Activated CD4-positive, alpha-beta T cell treated with anti-CD3 and anti-CD28 coated beads, Interleukin-2, amount 10 ng/mL, durations not matched to agents 24 days and 14 days (primary cell): ENCODE measurements at regions of chr18 and their contacts with region 1.

Region 1: GRCh38 chr18:49486953-49487710 is at the start of gene C18orf32:
- DNase-seq: peak; percentile 98
- H3K4me3 Mint-ChIP-seq: peak within 1 kb of the TSS; percentile 89
- H3K27ac Mint-ChIP-seq: peak within 1 kb of the TSS; percentile 94
- H3K4me1 Mint-ChIP-seq: peaks cover 42% of the 10 kb centered on the region
- H3K27me3 Mint-ChIP-seq: no peaks in the 10 kb centered on the region
- total RNA-seq, gene C18orf32: 20.4 and 26.1 TPM in 2 replicates

Region 2: DNA sequence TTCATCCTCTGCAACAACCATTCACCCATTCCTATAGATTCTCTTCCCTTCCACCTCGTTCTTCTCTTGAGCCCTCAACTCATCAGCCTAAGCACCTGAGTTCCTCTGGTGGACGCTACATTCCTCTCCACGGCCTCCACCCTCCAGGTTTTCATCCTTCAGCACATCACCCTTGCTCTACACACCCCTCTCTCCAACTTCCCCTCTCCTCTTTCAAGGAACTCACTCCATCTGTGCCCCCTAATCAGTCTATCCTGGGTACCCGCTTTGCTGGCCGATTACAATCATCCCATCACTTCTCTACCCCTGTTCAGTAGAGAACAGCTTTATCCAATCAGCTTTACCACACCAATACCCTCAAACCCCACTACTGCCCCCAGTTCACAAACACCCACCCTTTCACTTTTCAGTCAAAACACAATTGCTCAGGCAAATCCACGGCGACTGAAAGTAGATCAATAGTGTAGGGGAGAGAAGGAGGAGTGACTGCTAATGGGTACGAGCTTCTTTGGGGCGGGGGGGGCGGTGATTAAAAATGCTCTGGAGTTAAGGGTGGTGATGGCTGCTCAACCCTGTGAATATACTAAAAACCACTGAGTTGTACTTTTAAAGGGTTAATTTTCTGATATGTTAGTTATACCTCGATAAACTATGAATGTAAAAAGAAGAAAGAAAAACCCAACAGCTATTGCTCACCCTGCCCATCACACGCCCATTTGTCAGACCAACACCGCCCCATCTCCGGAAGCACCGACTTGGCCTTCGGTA is 27.5 kb before region 1 on chr18:
- intact Hi-C with region 1: loop called (anchors 1 kb)
- DNase-seq: peak; percentile 66
- H3K4me3 Mint-ChIP-seq: peak overlapping the region; percentile 85
- H3K27ac Mint-ChIP-seq: peak overlapping the region; percentile 74
- H3K4me1 Mint-ChIP-seq: peaks cover 22% of the 10 kb centered on the region
- H3K27me3 Mint-ChIP-seq: peaks cover 1% of the 10 kb centered on the region

Region 3: DNA sequence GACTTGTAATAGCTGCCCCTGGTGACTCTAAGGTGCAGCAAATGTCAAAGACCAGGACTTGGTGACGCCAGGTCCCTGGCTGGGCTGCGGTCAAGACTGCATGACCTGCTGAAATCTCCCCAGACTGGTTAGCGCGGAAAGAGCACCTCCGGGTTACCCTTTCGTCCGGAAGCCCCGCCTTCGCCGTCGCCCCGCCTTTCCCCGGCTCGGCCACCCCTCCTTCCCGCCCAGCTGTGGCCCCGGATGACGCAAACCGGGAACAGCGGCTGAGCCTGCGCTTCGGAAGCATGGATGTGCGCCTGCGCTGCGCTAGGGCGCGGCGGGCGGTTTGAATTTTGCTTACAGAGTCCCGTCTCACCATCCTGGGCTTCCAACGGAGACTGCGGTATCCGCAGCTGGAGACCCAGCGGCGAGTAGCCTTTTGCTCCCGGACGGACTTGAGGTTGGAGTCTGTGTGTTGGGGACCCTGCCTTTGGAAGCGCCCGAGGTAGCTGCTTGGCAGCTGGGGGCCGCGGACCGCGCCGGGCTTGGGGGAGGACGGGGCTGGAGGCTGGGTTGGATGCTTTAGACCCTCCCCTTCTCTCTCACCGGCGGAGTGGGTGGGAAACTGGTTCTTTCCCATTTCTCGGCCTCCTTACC is 887.7 kb after region 1 on chr18 and contains the start of gene SKA1:
- intact Hi-C with region 1: loop called (anchors 5 kb)
- DNase-seq: peak; percentile 98
- H3K4me3 Mint-ChIP-seq: peak within 1 kb of the TSS; percentile 90
- H3K27ac Mint-ChIP-seq: peak within 1 kb of the TSS; percentile 89
- H3K4me1 Mint-ChIP-seq: peaks cover 15% of the 10 kb centered on the region
- H3K27me3 Mint-ChIP-seq: peaks cover 6% of the 10 kb centered on the region
- total RNA-seq, gene SKA1: 20.0 and 22.1 TPM in 2 replicates